GM12878 (cell line): ENCODE measurements at regions of chr6 and their contacts with region 1.

Region 1: GRCh38 chr6:116060572-116061283 is at the start of gene FRK:
- DNase-seq: no peak
- ATAC-seq: peak; percentile 60
- H3K4me3 ChIP-seq: no peak within 1 kb of the TSS
- H3K27ac ChIP-seq: no peak within 1 kb of the TSS
- H3K4me1 ChIP-seq: peaks cover 11% of the 10 kb centered on the region
- H3K27me3 ChIP-seq: no peaks in the 10 kb centered on the region
- CTCF ChIP-seq: no peak
- EP300 ChIP-seq: no peak
- POLR2A ChIP-seq: no peak
- RAD21 ChIP-seq: no peak
- polyA plus RNA-seq, gene FRK: 0.29 to 0.32 TPM

Region 2: DNA sequence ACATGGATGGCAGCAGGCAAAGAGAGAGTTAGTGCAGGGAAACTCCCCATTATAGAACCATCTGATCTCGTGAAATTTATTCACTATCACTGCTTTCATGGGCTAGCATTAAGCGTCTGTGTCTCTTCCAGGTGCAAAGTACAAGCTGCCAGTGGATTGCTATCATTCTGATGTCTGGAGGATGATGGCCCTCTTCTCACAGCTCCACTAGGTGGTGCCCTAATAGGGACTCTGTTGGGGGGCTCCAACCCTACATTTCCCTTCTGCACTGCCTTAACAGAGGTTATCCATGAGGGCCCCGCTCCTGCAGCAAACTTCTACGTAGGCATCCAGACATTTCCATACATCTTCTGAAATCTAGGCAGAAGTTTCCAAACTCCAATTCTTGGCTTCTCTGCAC is 1370.1 kb before region 1 on chr6:
- CTCF ChIA-PET with region 1: no interaction called
- POLR2A ChIA-PET with region 1: no interaction called
- RAD21 ChIA-PET with region 1: no interaction called
- SMC1A ChIA-PET with region 1: no interaction called
- in situ Hi-C with region 1: no loop called
- intact Hi-C with region 1: no loop called
- DNase-seq: no peak
- ATAC-seq: no peak; the same call in 2 of the 3 replicates
- H3K4me3 ChIP-seq: no peak overlapping the region
- H3K27ac ChIP-seq: no peak overlapping the region
- H3K4me1 ChIP-seq: no peaks in the 10 kb centered on the region
- H3K27me3 ChIP-seq: no peaks in the 10 kb centered on the region
- CTCF ChIP-seq: peak in 1 of 3 experiments; percentile 19; a peak in 1 of 6 replicates
- EP300 ChIP-seq: no peak
- POLR2A ChIP-seq: no peak
- RAD21 ChIP-seq: peak; percentile 46; the same call in 1 of the 2 replicates

Region 3: DNA sequence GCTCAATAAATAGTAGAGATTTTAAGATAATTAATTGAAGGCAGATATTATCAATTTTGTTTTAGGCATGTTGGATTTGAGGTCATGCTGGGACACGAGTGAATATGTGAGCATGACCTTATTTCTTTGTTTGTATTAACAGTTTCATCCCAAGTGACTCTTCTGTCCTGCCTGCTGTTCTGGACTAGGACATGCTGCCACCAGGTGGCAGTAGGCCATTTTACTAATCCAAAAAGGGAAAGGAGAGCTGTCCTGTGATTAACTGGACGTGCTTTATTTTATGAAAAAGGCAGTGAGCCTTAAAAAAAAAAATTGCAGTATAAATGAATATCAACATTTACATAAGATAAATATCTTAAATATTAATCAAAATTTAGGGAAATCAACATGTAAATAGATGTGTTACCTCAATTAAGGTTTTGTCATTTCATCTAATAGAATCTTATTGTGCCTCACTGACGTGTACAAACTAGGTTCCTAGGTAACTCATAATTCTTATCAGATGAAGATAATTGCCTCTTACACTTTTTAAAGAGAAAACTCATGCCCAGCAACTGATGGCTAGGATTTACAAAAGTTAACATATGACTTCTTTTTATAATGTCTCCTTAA is 49.8 kb before region 1 on chr6:
- CTCF ChIA-PET with region 1: interaction called, 13 read pairs
- POLR2A ChIA-PET with region 1: interaction called, 4 read pairs
- RAD21 ChIA-PET with region 1: interaction called, 20 read pairs
- SMC1A ChIA-PET with region 1: interaction called, 46 read pairs
- in situ Hi-C with region 1: no loop called
- intact Hi-C with region 1: loop called (anchors 2 kb)
- DNase-seq: no peak
- ATAC-seq: peak; percentile 67
- H3K4me3 ChIP-seq: peak overlapping the region; percentile 9; the same call in 1 of the 2 replicates
- H3K27ac ChIP-seq: peak overlapping the region; percentile 59
- H3K4me1 ChIP-seq: peaks cover 53% of the 10 kb centered on the region
- H3K27me3 ChIP-seq: no peaks in the 10 kb centered on the region
- CTCF ChIP-seq: peak; percentile 82 to 88 (median 84)
- EP300 ChIP-seq: no peak
- POLR2A ChIP-seq: no peak
- RAD21 ChIP-seq: peak; percentile 95

Region 4: DNA sequence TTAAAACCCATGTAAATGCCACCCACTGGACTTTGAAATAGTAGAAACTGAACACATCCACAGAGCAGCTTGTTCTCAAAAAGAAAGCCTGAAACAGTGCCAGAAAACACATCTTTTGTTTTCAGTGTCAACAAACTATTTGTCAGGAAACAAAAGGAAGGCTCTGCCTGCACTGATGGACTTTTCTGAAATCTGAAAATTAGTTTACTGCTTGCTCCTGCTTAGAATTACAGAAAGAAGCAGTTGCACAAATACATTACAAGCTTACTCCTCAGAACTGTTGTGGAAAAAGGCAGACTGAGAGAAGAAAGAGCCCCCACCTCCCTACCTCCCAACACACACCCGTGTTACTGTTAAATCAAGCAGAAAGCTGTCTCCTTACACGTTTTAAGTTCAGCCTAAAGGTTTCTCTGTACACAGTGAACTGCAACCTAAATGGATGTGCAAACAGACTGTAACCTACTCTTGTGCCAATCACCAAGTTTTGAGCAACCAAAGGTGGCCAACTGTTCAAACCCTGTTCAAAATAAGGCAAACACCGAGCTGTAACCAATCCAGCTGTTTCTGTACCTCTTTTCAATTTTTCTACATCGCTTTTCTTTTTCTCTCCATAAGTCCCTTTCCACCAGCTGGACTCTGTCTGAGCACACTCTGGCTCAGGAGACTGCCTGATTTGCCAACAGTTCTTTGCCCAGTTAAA is 43.7 kb before region 1 on chr6:
- CTCF ChIA-PET with region 1: interaction called, 13 read pairs
- POLR2A ChIA-PET with region 1: interaction called, 3 read pairs
- RAD21 ChIA-PET with region 1: interaction called, 20 read pairs
- SMC1A ChIA-PET with region 1: interaction called, 46 read pairs
- in situ Hi-C with region 1: no loop called
- intact Hi-C with region 1: no loop called
- DNase-seq: no peak
- ATAC-seq: peak; percentile 27
- H3K4me3 ChIP-seq: peak overlapping the region; percentile 39; the same call in 1 of the 2 replicates
- H3K27ac ChIP-seq: peak overlapping the region; percentile 90
- H3K4me1 ChIP-seq: peaks cover 69% of the 10 kb centered on the region
- H3K27me3 ChIP-seq: no peaks in the 10 kb centered on the region
- CTCF ChIP-seq: no peak
- EP300 ChIP-seq: no peak
- POLR2A ChIP-seq: no peak
- RAD21 ChIP-seq: no peak

Region 5: DNA sequence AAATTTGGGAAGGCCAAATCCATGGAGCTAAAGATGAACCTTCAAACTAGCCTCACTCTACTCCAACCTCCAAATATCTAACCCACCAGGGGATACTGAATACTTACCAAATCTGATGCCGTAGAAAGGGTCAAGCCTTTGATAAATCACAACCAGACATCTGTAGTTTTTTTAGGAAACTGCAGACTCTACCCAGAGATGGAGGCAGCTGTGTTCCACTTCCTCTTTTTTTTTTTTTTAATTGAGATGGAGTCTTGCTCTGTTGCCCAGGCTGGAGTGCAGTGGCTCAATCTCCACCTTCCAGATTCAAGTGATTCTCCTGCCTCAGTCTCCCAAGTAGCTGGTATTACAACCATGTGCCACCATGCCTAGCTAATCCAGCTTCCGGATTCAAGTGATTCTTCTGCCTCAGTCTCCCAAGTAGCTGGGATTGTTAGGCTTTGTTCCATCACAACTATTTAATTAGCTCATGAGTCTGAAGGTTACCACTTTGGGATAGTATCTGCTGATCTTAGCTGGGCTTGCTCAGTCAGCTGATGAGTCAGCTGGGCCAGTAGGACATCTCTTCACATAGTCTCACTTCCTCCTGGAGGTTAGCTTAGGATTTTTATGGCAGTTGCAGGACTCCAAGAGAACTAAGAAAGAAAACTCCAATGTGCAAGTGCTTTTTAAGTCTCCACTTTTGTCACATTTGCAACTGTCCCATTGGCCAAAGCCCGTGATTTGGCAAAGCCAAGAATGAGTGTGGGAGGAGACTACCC is 13.4 kb before region 1 on chr6:
- CTCF ChIA-PET with region 1: interaction called, 6 read pairs
- POLR2A ChIA-PET with region 1: interaction called, 3 read pairs
- RAD21 ChIA-PET with region 1: interaction called, 3 read pairs
- SMC1A ChIA-PET with region 1: interaction called, 19 read pairs
- in situ Hi-C with region 1: no loop called
- intact Hi-C with region 1: no loop called
- DNase-seq: no peak
- ATAC-seq: peak; percentile 78
- H3K4me3 ChIP-seq: no peak overlapping the region
- H3K27ac ChIP-seq: no peak overlapping the region
- H3K4me1 ChIP-seq: peaks cover 7% of the 10 kb centered on the region; the same call in 1 of the 2 replicates
- H3K27me3 ChIP-seq: no peaks in the 10 kb centered on the region
- CTCF ChIP-seq: no peak
- EP300 ChIP-seq: no peak
- POLR2A ChIP-seq: no peak
- RAD21 ChIP-seq: no peak

Region 6: GRCh38 chr6:116073765-116074419 is 13.2 kb after region 1 on chr6:
- CTCF ChIA-PET with region 1: interaction called, 7 read pairs
- POLR2A ChIA-PET with region 1: interaction called, 4 read pairs
- RAD21 ChIA-PET with region 1: interaction called, 5 read pairs
- SMC1A ChIA-PET with region 1: interaction called, 14 read pairs
- in situ Hi-C with region 1: no loop called
- intact Hi-C with region 1: no loop called
- DNase-seq: no peak
- ATAC-seq: no peak
- H3K4me3 ChIP-seq: no peak overlapping the region
- H3K27ac ChIP-seq: no peak overlapping the region
- H3K4me1 ChIP-seq: no peaks in the 10 kb centered on the region
- H3K27me3 ChIP-seq: no peaks in the 10 kb centered on the region
- CTCF ChIP-seq: no peak
- EP300 ChIP-seq: no peak
- POLR2A ChIP-seq: no peak
- RAD21 ChIP-seq: no peak

Region 7: DNA sequence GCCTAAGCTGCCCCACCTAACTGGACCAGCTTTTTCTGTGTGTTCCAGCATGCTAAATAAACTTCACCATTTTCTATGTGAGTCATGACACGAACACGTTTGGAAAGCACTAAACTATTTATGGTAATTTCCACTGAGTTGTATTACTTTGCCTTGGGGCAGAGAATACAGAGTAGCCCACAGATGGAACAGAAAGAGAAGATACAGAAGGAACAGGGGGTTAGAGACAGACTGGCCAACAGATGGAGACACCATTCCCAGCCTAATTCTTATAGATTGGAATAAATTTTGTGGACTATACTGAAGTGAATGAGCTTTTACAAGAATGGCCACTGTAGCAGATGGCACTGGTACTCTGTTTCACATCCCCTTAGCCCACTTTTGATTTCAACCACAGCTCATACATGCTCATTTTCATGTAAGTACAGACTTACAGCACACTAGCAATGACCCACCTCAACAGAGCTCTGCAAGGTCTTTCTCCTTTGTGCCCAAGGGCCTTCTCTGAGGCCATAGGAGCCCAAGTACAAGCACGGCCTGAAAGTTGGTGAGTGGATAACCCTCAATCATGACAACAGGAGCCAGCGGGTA is 26.8 kb after region 1 on chr6:
- CTCF ChIA-PET with region 1: interaction called, 26 read pairs
- POLR2A ChIA-PET with region 1: interaction called, 4 read pairs
- RAD21 ChIA-PET with region 1: interaction called, 50 read pairs
- SMC1A ChIA-PET with region 1: interaction called, 54 read pairs
- in situ Hi-C with region 1: no loop called
- intact Hi-C with region 1: no loop called
- DNase-seq: peak; percentile 92
- ATAC-seq: peak; percentile 92
- H3K4me3 ChIP-seq: peak overlapping the region; percentile 15; the same call in 1 of the 2 replicates
- H3K27ac ChIP-seq: peak overlapping the region; percentile 98
- H3K4me1 ChIP-seq: peaks cover 57% of the 10 kb centered on the region
- H3K27me3 ChIP-seq: no peaks in the 10 kb centered on the region
- CTCF ChIP-seq: no peak
- EP300 ChIP-seq: peak; percentile 45 to 80; a peak in 1 of 4 replicates
- POLR2A ChIP-seq: 0 out of 2 replicates have a peak, but pooled peaks have one; percentile 18
- RAD21 ChIP-seq: 0 out of 2 replicates have a peak, but pooled peaks have one; percentile 4